PC-9 (cell line): ENCODE measurements at regions of chr17 and their contacts with region 1.

Region 1: DNA sequence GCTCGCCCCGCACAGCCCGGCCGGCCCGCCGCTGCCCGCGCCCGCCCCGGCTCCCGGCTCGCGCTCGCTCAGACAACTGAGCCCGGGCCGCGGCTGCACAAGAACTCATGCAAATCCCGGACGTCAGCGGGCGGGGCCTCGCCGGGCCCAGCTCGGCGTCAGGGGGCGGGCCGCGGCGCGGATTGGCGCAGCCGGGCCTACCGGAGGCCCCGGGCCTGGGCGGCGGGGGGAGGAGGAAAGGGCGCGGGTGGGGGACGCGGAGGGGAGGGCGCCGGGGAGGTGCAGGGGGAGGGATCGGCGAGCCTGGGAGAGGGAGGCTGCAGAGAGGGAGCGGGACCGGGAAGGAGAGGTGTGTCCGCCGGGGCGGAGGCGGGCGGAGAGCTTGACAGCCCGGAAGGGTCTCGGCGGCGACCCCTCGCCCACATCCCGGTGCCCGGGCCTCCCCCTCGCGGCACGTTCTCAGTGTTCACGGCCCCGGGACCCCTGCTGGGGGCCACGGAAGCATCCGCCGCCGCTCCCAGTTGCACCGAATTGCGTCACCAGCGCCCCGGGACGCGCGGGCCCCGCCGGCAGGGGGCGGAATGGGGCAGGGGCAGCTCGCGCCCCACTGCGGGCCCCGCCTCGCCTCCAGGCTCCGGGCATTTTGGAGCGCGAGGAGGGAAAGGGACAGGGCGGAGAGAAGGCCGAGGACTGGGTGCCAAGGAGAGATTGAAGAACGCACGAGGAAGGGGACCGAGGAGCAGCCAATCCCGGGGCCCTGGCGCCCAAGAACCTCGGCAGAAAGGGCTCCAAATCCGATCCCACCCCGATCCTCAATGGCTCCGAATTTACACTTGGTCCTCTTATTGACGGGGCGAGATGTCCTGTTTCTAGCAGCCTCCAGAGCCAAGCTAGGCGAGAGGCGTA is at the start of gene CBX4:
- DNase-seq: peak; percentile 71 to 93
- H3K4me3 ChIP-seq: peak within 1 kb of the TSS; percentile 86
- H3K27ac ChIP-seq: peak within 1 kb of the TSS; percentile 83
- H3K4me1 ChIP-seq: peaks cover 15% of the 10 kb centered on the region
- H3K27me3 ChIP-seq: peaks cover 4% of the 10 kb centered on the region; the same call in 1 of the 2 replicates
- CTCF ChIP-seq: peak; percentile 83
- total RNA-seq, gene CBX4: 32.0 and 33.1 TPM in 2 replicates

Region 2: GRCh38 chr17:79789534-79790353 is 49.9 kb before region 1 on chr17:
- CTCF ChIA-PET with region 1: no interaction called
- POLR2A ChIA-PET with region 1: no interaction called
- intact Hi-C with region 1: no loop called
- DNase-seq: peak in 1 of 2 experiments; percentile 50
- H3K4me3 ChIP-seq: no peak overlapping the region
- H3K27ac ChIP-seq: no peak overlapping the region
- H3K4me1 ChIP-seq: no peaks in the 10 kb centered on the region
- H3K27me3 ChIP-seq: no peaks in the 10 kb centered on the region
- CTCF ChIP-seq: peak; percentile 73

Region 3: GRCh38 chr17:79803997-79804855 is 35.4 kb before region 1 on chr17:
- CTCF ChIA-PET with region 1: interaction called, 4 read pairs
- POLR2A ChIA-PET with region 1: interaction called, 12 read pairs
- intact Hi-C with region 1: no loop called
- DNase-seq: no peak
- H3K4me3 ChIP-seq: no peak overlapping the region
- H3K27ac ChIP-seq: no peak overlapping the region
- H3K4me1 ChIP-seq: peaks cover 8% of the 10 kb centered on the region; the same call in 1 of the 2 replicates
- H3K27me3 ChIP-seq: peaks cover 30% of the 10 kb centered on the region
- CTCF ChIP-seq: no peak

Region 4: DNA sequence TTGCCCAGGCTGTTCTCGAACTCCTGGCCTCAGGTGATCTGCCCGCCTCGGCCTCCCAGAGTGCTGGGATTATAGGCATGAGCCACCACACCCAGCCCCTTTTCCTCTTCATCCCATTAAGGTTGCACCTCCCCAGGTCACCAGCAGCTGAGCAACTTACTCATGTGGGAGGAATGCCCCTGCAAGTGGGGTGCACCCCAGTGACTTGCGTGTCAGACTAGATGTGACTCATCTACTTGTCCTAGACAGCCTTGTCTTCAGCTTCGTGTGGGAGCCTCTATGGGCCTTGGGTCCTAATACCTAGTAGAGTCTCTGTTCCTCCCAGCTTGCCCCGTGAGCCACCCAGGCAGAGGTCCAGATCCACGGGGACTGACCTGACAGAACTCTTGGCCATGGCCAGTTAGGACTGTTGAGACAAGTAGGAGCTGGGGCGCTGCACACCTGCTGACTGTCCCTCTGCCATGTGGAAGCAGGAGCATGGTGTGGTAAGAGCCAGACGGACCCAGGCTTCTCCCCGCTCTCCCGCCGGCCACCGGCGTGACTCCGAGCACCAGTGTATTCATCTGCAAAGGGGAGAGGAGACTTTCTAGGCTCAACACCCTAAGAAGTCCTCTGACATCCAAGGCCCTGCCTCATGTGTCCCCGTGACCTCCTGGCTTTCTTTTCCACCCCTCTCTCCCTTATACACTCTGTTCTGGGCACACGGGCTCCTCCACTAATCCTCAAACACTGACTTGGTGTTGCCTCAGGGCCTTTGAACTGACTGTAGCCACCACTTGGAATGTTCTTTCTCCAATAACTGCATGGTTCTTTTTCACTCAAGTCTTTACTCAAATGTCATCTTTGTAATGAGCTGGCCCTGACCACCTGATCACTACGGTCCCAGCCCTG is 11.2 kb after region 1 on chr17:
- CTCF ChIA-PET with region 1: interaction called, 3 read pairs
- POLR2A ChIA-PET with region 1: interaction called, 25 read pairs
- intact Hi-C with region 1: no loop called
- DNase-seq: peak; percentile 79 to 92
- H3K4me3 ChIP-seq: no peak overlapping the region
- H3K27ac ChIP-seq: peak overlapping the region; percentile 59
- H3K4me1 ChIP-seq: peaks cover 20% of the 10 kb centered on the region
- H3K27me3 ChIP-seq: no peaks in the 10 kb centered on the region
- CTCF ChIP-seq: no peak

Region 5: DNA sequence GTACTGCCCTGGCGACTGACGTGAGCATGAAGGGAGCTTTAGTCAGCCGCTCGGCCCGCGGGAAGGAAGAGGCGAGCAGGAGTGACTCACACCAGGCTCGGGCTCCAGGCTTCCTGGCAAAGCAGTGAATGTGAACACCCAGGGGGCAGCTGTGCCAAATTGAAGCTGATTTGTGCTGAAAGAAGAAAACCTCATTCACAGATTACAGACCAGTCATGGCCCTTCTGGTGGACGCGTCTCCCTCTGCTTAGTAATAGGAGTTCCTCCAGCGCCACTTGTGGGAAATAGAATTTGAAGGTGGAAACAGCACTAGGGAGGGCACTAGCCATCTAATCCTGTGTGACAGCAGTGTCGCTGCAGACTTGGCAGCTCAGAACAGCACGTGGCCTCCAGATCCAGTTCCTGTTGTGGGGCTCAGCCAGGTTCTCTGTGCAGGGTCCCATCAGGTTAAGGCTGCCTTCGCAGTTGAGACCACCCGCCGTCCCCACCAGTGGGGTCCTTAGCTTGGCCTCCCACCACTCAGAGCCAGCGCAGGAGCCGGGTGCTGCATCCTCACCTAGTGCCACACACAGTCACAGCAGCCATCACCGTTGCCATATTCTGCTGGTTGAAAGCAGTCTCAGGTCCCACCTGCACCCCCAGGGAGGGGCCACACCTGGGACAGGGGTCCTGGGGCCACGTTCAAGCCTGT is 987.5 kb after region 1 on chr17:
- CTCF ChIA-PET with region 1: no interaction called
- POLR2A ChIA-PET with region 1: interaction called, 12 read pairs
- intact Hi-C with region 1: no loop called
- DNase-seq: peak; percentile 70 to 84
- H3K4me3 ChIP-seq: no peak overlapping the region
- H3K27ac ChIP-seq: peak overlapping the region; percentile 32; the same call in 1 of the 2 replicates
- H3K4me1 ChIP-seq: peaks cover 7% of the 10 kb centered on the region
- H3K27me3 ChIP-seq: no peaks in the 10 kb centered on the region
- CTCF ChIP-seq: no peak